Heart left ventricle (tissue), 16 donors: ENCODE measurements at regions of chr19 and their contacts with region 1.

Region 1: DNA sequence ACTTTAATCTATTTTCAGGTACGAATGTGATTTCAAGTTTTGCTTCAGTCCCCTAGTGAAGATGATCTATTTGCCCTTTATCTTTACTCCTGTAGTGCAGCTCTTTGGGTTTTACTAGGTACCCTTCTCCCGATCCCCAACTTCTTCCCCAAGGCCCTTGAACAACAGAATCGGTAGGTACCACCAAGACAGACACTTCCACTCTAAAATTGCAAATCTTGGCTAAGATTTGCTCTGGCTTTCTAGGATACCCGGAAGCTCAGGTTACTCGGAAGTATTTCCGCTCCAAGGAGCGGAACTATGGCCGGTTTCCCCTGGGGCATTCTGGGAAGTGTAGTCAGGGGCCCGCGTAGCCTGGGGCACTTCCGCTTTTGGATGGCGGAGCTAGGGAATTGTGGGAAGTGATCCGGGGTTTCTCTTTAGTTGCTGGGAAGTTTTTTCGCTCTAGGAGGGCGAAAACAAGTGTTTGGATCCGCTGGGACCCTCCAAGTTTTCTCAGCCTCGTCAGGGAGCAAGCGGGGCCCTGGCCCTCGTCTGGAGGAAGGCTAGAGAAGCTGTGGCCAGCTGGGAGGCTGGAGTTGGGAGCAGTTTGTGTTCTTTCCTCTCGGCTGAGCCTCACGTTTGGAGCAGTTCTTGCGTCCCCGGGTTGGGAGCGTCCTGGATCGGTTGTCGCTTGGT is 5.1 kb upstream of the ZNF227 start:
- DNase-seq: peak; percentile 91 to 94 (median 93)
- ATAC-seq: peak; percentile 96 to 98 (median 97)
- H3K4me3 ChIP-seq: peak overlapping the region; percentile 47 to 86 (median 76)
- H3K27ac ChIP-seq: peak overlapping the region; percentile 84 to 96 (median 92)
- H3K4me1 ChIP-seq: peaks cover 0 to 15% (median 7%) of the 10 kb centered on the region in 12 donors
- H3K27me3 ChIP-seq: peaks cover 0 to 5% (median 0%) of the 10 kb centered on the region in 9 donors
- CTCF ChIP-seq: no peak
- POLR2A ChIP-seq: peak in 1 of 2 donors; percentile 47

Region 2: DNA sequence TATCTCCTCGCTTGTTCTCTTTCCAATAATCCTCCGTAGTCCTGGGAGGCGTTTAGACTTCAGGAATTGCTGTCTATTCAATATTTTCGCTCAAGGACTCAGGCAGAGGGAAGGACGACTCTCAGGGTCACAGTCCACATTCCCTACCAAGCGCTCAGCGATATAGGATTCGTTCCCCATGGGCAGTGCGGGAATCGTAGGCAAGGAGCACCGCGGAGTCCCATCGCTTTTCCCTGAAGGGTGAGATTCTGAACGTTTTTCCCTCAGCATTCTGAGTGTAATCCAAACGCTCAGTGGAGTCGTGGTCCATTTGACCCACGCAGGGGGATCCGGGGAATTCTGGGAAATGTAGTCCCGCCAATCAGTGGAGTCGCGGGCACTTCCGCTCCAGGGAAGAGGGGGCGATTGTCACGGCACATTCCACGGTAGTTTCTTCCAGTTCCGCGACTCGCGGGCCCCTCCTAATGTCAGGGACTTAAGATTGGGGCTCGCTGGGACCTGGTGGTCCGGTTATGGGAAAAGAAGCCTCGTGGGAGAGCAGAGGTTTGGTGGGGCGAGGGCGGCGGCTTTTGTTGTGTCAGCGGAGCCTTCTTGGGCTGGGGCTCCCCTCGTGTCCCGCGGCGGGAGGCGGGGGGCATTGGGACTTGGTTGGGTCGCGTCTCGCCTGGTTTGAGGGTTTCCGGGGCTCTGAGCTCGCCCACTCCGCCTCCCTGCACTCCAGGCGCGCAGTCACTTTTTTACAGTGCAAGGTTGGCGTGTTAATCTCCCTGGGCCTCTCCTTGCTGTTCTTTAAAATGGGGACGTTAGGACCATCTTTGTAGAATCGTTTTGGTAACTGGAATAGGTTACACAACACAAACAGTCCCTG is 65.8 kb before region 1 on chr19 and contains the start of gene ZNF234:
- intact Hi-C with region 1: loop called in 1 of 10 experiments (anchors 2 kb)
- DNase-seq: peak; percentile 85 to 91 (median 90)
- ATAC-seq: peak; percentile 93 to 99 (median 98)
- H3K4me3 ChIP-seq: peak within 1 kb of the TSS; percentile 62 to 98 (median 89)
- H3K27ac ChIP-seq: peak within 1 kb of the TSS; percentile 61 to 90 (median 84)
- H3K4me1 ChIP-seq: peaks cover 0 to 19% (median 12%) of the 10 kb centered on the region in 12 donors
- H3K27me3 ChIP-seq: no peaks in the 10 kb centered on the region
- CTCF ChIP-seq: peak in 2 of 12 donors; percentile 8 to 17
- POLR2A ChIP-seq: peak in 1 of 2 donors; percentile 54
- total RNA-seq, gene ZNF234: 4.6 to 12.8 (median 9.4) TPM